ENCODE measurements at regions of chr1 and their contacts with region 1.

Region 1: DNA sequence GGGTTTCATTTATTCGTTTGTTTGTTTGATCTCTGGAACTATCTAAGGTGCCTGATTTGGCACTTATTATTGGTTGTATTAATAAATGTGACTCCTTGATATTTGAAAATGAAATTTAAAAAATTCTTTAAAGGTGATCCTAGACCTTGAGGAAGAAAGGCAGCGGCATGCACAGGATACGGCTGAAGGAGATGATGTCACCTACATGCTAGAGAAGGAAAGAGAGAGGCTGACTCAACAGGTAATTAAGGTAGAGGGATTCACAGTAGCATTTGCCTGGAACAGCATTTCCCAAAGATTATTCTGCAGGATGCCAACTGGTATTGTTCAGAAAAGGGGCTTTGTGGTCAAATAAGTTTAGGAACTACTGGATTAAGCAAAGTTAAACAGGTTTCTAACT is 54.4 kb upstream of the WNT2B start:
- DNase-seq: no peak
- H3K4me3 ChIP-seq: no peak overlapping the region
- CTCF ChIP-seq: no peak

Region 2: GRCh38 chr1:112466078-112466660 is 11.9 kb after region 1 on chr1:
- CTCF ChIA-PET with region 1: interaction called, 21 read pairs
- POLR2A ChIA-PET with region 1: interaction called, 3 read pairs
- DNase-seq: peak; percentile 74
- H3K4me3 ChIP-seq: peak overlapping the region; percentile 46
- CTCF ChIP-seq: peak; percentile 88

Region 3: DNA sequence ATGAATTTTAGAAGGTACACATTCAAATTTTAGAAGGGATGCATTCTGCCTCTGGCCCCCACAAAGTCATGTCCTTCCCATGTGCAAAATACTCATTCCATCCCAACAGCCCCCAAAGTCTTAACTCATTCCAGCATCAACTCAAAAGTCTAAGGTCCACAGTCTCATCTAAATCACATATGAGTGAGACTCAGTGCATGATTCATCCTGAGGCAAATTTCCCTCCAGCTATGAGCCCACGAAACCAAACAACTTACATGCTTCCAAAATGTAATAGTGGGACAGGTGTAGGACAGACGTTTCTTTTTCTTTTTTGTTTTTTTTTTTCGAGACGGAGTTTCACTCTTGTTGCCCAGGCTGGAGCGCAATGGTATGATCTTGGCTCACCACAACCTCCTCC is 42.0 kb after region 1 on chr1:
- CTCF ChIA-PET with region 1: no interaction called
- POLR2A ChIA-PET with region 1: no interaction called
- DNase-seq: no peak
- H3K4me3 ChIP-seq: no peak overlapping the region
- CTCF ChIP-seq: no peak